ENCODE measurements at regions of chr2 and their contacts with region 1.

Region 1: GRCh38 chr2:54522624-54523281 is 66.6 kb downstream of the SPTBN1 start:
- DNase-seq: peak; percentile 70
- ATAC-seq: peak; percentile 92
- H3K4me3 Mint-ChIP-seq: no peak overlapping the region
- H3K27ac Mint-ChIP-seq: no peak overlapping the region
- H3K4me1 Mint-ChIP-seq: peaks cover 12% of the 10 kb centered on the region
- H3K27me3 Mint-ChIP-seq: no peaks in the 10 kb centered on the region
- CTCF ChIP-seq: peak; percentile 74

Region 2: GRCh38 chr2:54259413-54260240 is 263.1 kb before region 1 on chr2:
- CTCF ChIA-PET with region 1: no interaction called
- POLR2A ChIA-PET with region 1: no interaction called
- intact Hi-C with region 1: no loop called
- DNase-seq: no peak
- ATAC-seq: no peak
- H3K4me3 Mint-ChIP-seq: no peak overlapping the region
- H3K27ac Mint-ChIP-seq: no peak overlapping the region
- H3K4me1 Mint-ChIP-seq: no peaks in the 10 kb centered on the region
- H3K27me3 Mint-ChIP-seq: no peaks in the 10 kb centered on the region
- CTCF ChIP-seq: no peak

Region 3: DNA sequence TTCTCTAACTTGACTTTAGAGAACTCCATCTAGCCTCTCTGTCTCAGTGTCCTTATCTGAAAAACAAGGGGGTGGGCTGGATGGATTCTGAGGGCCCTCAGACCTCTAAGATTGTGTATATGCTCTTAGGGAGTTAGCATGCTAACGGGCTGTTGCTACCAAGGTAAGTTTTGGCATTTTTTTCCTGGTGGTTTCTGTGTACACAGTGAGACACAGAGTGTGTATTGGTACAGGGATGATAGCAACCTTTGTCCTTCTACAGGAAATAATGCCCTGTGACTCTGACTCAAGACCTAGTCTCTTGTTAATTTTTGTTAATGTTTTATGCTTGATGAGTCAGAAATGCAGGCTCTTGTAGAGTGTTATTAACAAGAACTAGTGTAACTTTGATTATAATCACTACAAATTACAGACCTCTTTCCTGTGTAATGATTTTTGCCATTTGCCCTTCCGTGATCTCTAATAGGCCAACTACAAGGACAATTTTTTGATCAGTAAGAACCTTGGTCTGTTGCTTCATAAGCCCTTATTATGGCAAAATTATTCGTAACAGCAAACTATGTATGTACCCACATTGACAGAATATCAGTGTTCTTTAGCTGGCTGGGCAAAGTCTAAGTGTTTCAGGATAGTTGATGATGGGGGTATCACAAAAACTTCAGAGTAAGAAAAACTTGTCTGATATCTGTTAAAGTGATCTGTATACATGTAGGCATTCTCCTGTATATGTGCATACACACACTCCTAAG is 23.1 kb after region 1 on chr2:
- CTCF ChIA-PET with region 1: interaction called, 20 read pairs
- POLR2A ChIA-PET with region 1: no interaction called
- intact Hi-C with region 1: no loop called
- DNase-seq: no peak
- ATAC-seq: peak; percentile 51
- H3K4me3 Mint-ChIP-seq: no peak overlapping the region
- H3K27ac Mint-ChIP-seq: no peak overlapping the region
- H3K4me1 Mint-ChIP-seq: peaks cover 13% of the 10 kb centered on the region
- H3K27me3 Mint-ChIP-seq: no peaks in the 10 kb centered on the region
- CTCF ChIP-seq: no peak

Region 4: DNA sequence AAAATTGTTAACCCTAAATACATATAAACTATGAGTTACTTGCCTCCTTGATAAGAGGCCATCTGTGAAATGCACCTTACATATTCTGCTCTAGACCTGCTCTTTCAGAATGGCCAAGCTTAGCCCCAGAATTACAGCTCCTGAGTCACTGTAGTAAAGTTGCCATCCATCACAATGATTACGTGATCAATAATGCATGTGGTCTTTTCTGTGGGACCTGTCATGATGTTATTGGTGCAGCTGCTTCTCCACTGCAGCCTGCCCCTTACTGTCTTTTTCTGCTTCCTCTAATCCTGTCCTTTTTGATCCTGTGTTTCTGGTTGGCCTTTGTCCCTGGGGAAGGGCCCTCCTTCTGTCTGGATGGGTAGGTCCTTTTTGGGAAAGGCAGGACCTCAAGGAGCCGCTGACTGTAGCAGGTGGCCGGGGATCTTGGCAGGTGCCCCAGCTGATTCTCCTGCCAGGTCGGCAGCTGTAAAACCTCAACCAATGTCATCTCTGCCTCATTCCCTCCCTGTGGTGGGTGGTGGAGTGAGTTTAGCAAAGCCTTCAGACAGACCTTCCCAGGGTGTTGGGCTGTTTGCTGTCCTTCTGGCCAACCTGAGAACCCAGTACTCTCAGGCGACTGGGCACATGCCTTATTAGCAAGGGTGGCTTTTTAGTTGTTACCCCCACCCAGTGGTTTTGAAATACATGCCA is 74.5 kb after region 1 on chr2:
- CTCF ChIA-PET with region 1: interaction called, 27 read pairs
- POLR2A ChIA-PET with region 1: no interaction called
- intact Hi-C with region 1: no loop called
- DNase-seq: peak; percentile 70
- ATAC-seq: peak; percentile 63
- H3K4me3 Mint-ChIP-seq: peak overlapping the region; percentile 70
- H3K27ac Mint-ChIP-seq: peak overlapping the region; percentile 98
- H3K4me1 Mint-ChIP-seq: peaks cover 93% of the 10 kb centered on the region
- H3K27me3 Mint-ChIP-seq: no peaks in the 10 kb centered on the region
- CTCF ChIP-seq: no peak

Region 5: DNA sequence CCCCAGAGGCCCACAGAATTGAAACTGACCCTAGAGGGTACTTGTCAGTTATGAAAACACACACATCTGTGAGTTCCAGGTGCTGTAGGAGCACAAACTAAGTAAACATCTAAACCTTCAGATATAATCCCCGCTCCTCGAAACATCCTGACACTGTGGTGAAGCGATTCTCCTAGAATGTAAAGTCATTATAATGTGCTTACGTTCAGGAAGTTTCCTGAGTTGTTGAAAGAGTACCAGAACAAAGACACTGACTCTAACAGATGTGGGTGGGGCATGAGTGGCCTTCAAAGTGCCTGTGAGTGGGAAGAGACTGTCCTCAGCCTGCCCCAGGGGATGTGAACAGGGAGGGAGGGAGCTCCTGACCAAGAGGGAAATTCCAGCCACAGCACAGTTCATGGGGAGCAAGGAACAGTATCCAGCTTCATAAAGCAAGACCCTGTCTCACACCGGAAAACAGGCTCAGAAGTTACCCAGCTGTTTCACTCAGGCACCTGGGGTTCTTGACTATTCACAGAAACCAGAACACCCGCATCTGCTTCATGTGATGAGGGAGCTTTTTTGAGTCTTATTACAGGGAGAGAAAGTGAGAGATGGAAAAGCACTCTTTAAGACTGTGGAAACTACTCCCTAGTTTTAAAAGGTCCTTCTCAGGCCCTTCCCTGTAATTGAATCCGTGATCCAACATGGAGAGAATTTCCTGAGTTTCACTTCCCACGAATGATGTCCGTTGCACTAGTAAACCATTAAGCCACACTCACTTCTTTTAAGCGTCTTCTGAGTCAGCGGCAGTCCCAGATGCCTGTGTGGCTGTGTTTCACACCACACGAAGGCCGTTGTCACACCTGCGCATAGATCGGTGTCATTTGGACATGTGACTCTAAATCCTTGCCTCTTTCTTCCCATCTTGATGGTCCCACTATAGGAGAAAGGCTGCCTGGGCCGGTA is 112.1 kb after region 1 on chr2:
- CTCF ChIA-PET with region 1: interaction called, 5 read pairs
- POLR2A ChIA-PET with region 1: interaction called, 4 read pairs
- intact Hi-C with region 1: loop called (anchors 10 kb)
- DNase-seq: peak; percentile 21
- ATAC-seq: peak; percentile 59
- H3K4me3 Mint-ChIP-seq: no peak overlapping the region
- H3K27ac Mint-ChIP-seq: peak overlapping the region; percentile 71
- H3K4me1 Mint-ChIP-seq: peaks cover 30% of the 10 kb centered on the region
- H3K27me3 Mint-ChIP-seq: no peaks in the 10 kb centered on the region
- CTCF ChIP-seq: no peak

Region 6: DNA sequence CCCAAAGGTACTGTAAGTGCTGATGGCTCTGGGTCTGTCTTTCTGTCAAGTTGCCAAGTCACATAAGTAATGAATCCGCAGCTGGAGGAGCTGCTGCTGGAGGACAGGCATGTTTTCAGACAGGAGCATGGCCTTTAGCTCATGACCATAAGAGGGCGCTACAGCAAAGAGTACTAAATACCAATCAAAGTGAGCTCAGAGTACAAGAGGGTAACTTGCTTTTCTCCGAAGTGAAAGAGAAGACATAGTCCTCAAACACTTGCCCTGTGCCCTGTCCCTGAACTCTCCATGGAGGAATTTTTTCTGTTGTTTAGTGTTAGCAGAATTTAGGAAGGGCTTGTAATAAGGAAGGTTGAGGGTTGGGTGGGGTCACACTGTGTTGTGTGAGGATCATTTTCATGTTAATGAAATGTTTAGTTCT is 142.7 kb after region 1 on chr2:
- CTCF ChIA-PET with region 1: interaction called, 46 read pairs
- POLR2A ChIA-PET with region 1: no interaction called
- intact Hi-C with region 1: no loop called
- DNase-seq: peak; percentile 75
- ATAC-seq: peak; percentile 89
- H3K4me3 Mint-ChIP-seq: no peak overlapping the region
- H3K27ac Mint-ChIP-seq: peak overlapping the region; percentile 82
- H3K4me1 Mint-ChIP-seq: peaks cover 8% of the 10 kb centered on the region
- H3K27me3 Mint-ChIP-seq: no peaks in the 10 kb centered on the region
- CTCF ChIP-seq: peak; percentile 72

Measured in activated CD8-positive, alpha-beta T cell treated with anti-CD3 and anti-CD28 coated beads for 36 hours (primary cell).